Testis (tissue), 5 donors: ENCODE measurements at regions of chr19 and their contacts with region 1.

Region 1: GRCh38 chr19:18589380-18590272 is 1.0 kb downstream of the REX1BD start:
- DNase-seq: peak; percentile 71
- H3K4me3 ChIP-seq: peak overlapping the region; percentile 74 to 75
- H3K27ac ChIP-seq: peak overlapping the region; percentile 35 to 76
- H3K4me1 ChIP-seq: peaks cover 20% of the 10 kb centered on the region
- H3K27me3 ChIP-seq: no peaks in the 10 kb centered on the region
- CTCF ChIP-seq: peak in 2 of 3 experiments; percentile 10 to 20
- POLR2A ChIP-seq: no peak

Region 2: GRCh38 chr19:18626911-18627310 is 37.3 kb after region 1 on chr19:
- intact Hi-C with region 1: no loop called
- DNase-seq: no peak
- H3K4me3 ChIP-seq: no peak overlapping the region
- H3K27ac ChIP-seq: no peak overlapping the region
- H3K4me1 ChIP-seq: no peaks in the 10 kb centered on the region
- H3K27me3 ChIP-seq: no peaks in the 10 kb centered on the region
- CTCF ChIP-seq: no peak
- POLR2A ChIP-seq: no peak

Region 3: DNA sequence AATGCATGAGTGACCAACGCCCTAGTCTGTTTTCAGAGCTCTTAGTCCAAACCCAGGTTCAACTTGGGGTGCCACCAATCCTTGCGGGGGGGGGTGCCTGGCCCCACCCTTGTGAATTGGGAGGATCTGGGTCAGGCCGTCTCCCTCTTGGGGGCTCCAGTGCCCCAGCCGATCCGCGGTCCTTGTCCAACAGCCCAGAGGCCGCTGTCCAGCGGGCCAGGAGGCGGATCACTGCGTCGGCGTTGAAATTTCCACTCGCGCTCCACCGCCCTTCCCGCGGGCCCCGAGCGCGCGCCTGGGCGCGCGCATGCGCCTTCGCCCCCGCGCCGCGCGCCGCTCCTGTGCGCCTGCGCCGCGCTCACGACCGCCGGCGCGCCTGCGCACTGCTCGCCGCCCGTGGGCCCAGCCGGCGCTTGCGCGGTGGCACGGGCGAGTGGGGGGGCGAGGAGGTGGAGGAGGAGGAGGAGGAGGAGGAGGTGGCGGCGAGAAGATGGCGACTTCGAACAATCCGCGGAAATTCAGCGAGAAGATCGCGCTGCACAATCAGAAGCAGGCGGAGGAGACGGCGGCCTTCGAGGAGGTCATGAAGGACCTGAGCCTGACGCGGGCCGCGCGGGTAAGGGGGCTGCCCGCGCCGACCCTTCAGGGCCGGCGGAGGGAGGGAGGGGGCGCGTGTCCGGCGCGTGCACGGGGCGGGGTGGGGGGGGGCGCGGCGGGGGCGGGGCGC is 93.8 kb after region 1 on chr19 and contains the start of gene CRTC1:
- intact Hi-C with region 1: loop called (anchors 10 kb)
- DNase-seq: peak; percentile 82
- H3K4me3 ChIP-seq: peak within 1 kb of the TSS; percentile 60 to 61
- H3K27ac ChIP-seq: peak within 1 kb of the TSS in 1 of 2 donors; percentile 82
- H3K4me1 ChIP-seq: peaks cover 10% of the 10 kb centered on the region
- H3K27me3 ChIP-seq: no peaks in the 10 kb centered on the region
- CTCF ChIP-seq: no peak
- POLR2A ChIP-seq: peak; percentile 24
- total RNA-seq, gene CRTC1: 28.1 to 32.1 TPM

Region 4: DNA sequence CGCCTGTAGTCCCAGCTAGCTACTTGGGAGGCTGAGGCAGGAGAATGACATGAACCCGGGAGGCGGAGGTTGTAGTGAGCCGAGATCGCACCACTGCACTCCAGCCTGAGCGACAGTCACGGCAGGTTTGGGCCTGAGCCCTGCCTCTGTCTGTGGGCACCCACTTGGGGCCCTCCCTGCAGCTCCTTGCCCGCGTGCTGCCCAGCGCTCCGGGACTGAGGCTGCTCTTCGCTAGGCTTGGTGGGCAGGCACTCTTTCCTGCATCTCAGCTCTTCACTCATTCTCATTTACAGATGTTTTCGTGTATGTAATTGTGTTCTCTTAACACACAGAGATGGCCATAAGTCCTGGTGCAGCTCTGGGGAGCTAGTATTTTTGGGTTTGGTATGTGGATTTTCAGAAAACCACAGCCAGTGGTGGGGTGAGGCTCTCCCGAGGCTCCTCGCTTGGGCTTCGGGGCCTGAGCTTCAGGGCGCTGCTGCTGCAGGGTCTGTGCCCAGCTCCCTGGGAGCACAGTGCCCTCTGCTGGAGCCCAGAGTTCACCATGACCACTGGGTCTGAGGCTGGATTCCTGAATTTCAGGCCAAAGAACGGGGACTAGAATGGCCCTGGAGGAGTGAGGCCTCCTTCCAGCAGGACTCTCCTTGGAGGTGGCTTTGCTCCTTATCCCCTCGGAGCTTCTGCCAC is 257.4 kb after region 1 on chr19:
- intact Hi-C with region 1: loop called (anchors 10 kb)
- DNase-seq: peak; percentile 83
- H3K4me3 ChIP-seq: no peak overlapping the region
- H3K27ac ChIP-seq: peak overlapping the region in 1 of 2 donors; percentile 86
- H3K4me1 ChIP-seq: peaks cover 65% of the 10 kb centered on the region
- H3K27me3 ChIP-seq: no peaks in the 10 kb centered on the region
- CTCF ChIP-seq: peak; percentile 57 to 74 (median 71)
- POLR2A ChIP-seq: no peak